Mammary epithelial cell (primary cell): ENCODE measurements at regions of chr14 and their contacts with region 1.

Region 1: GRCh38 chr14:36655963-36656686 is 5.5 kb upstream of the PAX9 start:
- DNase-seq: no peak
- H3K4me3 ChIP-seq: peak overlapping the region in 1 of 3 experiments; percentile 4
- H3K27ac ChIP-seq: no peak overlapping the region
- H3K4me1 ChIP-seq: peaks cover 11% of the 10 kb centered on the region
- H3K27me3 ChIP-seq: peaks cover 76% of the 10 kb centered on the region
- CTCF ChIP-seq: peak; percentile 34 to 35

Region 2: GRCh38 chr14:36619853-36620252 is 36.3 kb before region 1 on chr14:
- CTCF ChIA-PET with region 1: no interaction called
- dilution Hi-C with region 1: no loop called
- in situ Hi-C with region 1: no loop called
- intact Hi-C with region 1: no loop called
- DNase-seq: peak; percentile 72
- H3K4me3 ChIP-seq: no peak overlapping the region
- H3K27ac ChIP-seq: no peak overlapping the region
- H3K4me1 ChIP-seq: no peaks in the 10 kb centered on the region
- H3K27me3 ChIP-seq: peaks cover 3% of the 10 kb centered on the region
- CTCF ChIP-seq: no peak

Region 3: DNA sequence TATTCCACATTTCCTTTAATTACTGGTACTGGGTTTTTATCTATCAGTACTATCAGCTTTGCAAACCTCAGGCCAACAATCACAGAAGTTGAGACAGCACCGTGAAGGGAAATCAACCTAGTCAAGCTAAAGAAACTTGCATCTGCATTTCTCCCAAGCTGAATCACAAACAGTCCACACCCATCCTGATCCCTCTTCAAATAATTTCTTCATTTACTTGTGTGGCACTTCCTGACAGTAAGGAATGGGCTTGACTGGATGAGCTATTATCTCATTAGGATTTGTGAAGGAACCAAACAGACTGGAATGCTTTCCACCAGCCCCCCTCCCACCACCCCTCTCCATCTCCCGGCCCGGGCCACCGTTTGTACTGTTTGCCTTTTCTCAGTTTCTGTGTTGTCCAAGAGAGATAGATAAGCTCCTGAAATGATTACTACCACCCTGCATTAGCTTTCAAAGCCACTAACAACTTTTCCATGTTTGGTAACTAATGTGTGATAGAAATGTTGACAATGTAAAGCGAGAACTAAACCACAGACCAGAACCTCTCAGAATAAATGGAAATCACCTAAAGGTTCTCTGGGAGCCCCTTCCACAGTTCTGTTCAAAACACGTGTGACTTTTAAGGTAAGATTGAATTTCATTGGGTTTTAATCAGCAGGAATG is 280.0 kb after region 1 on chr14:
- CTCF ChIA-PET with region 1: no interaction called
- dilution Hi-C with region 1: no loop called
- in situ Hi-C with region 1: loop called (anchors 10 to 25 kb)
- intact Hi-C with region 1: no loop called
- DNase-seq: peak; percentile 40
- H3K4me3 ChIP-seq: no peak overlapping the region
- H3K27ac ChIP-seq: no peak overlapping the region
- H3K4me1 ChIP-seq: peaks cover 4% of the 10 kb centered on the region
- H3K27me3 ChIP-seq: no peaks in the 10 kb centered on the region
- CTCF ChIP-seq: no peak

Region 4: DNA sequence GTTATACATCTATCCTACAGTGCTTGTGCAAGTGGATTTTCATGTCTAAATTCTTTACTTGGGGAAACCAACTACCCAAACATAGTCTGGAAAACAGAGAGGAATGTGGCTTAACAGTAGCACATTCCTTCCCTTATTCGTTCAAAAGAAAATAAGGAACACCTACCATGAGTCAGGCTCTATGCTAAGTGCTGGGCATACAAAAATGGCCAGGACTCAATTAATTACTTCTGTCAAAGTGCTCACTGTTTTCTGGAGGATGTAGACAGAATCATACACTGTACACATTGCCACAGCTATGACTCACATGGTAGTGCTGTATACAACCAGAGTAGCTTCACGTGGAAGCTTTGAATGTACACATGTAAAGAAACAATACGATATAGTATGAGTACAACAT is 466.1 kb after region 1 on chr14:
- CTCF ChIA-PET with region 1: no interaction called
- dilution Hi-C with region 1: no loop called
- in situ Hi-C with region 1: loop called in 1 of 2 experiments (anchors 10 kb)
- intact Hi-C with region 1: no loop called
- DNase-seq: peak; percentile 87
- H3K4me3 ChIP-seq: no peak overlapping the region
- H3K27ac ChIP-seq: no peak overlapping the region
- H3K4me1 ChIP-seq: peaks cover 12% of the 10 kb centered on the region
- H3K27me3 ChIP-seq: no peaks in the 10 kb centered on the region
- CTCF ChIP-seq: no peak